Left colon (tissue), 2 donors: ENCODE measurements at regions of chr9 and their contacts with region 1.

Region 1: GRCh38 chr9:71157731-71158130 is 36.3 kb upstream of the TRPM3 start:
- DNase-seq: no peak
- ATAC-seq: no peak

Region 2: GRCh38 chr9:71279151-71279739 is 121.5 kb after region 1 on chr9:
- intact Hi-C with region 1: loop called in 1 of 2 experiments (anchors 5 kb)
- DNase-seq: no peak
- ATAC-seq: no peak

Region 3: DNA sequence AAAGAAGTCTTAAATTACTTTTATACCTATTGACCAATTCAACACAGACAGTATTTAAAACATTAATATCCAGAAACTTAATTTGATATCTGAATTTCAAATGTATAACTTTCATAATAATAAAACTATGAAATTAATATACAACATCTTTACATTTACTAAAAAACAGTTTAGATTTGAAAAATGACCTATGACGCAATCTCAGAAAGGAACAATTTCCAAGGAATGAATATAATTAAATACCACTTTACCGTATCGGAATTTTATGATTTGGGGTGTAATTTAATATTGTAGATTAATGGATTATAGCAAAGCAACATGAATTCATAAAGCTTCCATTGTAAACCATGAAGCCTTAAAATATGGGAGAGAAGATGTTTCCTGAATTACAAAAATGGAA is 285.2 kb after region 1 on chr9:
- intact Hi-C with region 1: no loop called
- DNase-seq: no peak
- ATAC-seq: no peak